ENCODE measurements at regions of chr9 and their contacts with region 1.

Region 1: DNA sequence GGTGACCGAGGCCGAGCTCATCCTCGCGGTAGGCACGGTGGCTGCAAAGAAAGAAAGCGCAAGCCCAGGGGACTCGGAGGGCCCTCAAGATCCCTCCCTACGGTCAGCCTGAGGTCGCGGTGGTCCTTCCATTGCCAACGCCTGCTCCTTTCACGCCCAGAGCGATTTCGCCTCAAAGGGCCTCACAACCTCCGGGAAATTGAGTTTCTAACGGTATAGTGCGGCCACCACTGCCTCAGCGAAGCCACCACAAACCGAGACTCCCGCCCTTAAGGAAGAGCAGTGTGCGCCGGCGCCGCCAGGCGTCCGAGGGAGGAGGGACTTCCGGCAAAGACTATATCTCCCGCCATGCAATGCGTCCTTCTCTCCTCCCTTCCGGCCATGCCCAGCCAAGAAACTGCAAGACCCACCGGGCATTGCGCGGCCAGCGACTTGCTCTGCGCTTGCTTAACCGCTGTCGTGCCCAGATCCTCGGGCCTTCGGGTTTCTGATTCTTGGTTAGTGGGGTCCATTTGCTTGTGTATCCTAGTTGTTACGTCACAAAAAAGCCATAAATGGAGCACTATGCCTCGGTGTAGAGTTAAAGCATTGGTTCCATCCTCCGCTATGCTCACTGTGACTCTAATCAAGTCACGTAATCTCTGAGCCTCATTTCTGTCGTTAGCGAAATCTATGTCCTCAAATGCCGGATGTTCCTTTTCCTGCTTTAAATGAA is at the start of gene HAUS6:
- DNase-seq: peak; percentile 96
- ATAC-seq: peak; percentile 95
- H3K4me3 ChIP-seq: peak within 1 kb of the TSS; percentile 63 to 92 (median 82)
- H3K4me3 Mint-ChIP-seq: peak within 1 kb of the TSS; percentile 98
- H3K27ac ChIP-seq: peak within 1 kb of the TSS; percentile 53 to 88
- H3K27ac Mint-ChIP-seq: peak within 1 kb of the TSS; percentile 94
- H3K4me1 ChIP-seq: peaks cover 3 to 16% of the 10 kb centered on the region in 2 donors
- H3K4me1 Mint-ChIP-seq: peaks cover 22% of the 10 kb centered on the region
- H3K27me3 ChIP-seq: no peaks in the 10 kb centered on the region
- H3K27me3 Mint-ChIP-seq: no peaks in the 10 kb centered on the region
- CTCF ChIP-seq: peak; percentile 38
- total RNA-seq, gene HAUS6: 13.5 and 14.6 TPM in 2 replicates

Region 2: DNA sequence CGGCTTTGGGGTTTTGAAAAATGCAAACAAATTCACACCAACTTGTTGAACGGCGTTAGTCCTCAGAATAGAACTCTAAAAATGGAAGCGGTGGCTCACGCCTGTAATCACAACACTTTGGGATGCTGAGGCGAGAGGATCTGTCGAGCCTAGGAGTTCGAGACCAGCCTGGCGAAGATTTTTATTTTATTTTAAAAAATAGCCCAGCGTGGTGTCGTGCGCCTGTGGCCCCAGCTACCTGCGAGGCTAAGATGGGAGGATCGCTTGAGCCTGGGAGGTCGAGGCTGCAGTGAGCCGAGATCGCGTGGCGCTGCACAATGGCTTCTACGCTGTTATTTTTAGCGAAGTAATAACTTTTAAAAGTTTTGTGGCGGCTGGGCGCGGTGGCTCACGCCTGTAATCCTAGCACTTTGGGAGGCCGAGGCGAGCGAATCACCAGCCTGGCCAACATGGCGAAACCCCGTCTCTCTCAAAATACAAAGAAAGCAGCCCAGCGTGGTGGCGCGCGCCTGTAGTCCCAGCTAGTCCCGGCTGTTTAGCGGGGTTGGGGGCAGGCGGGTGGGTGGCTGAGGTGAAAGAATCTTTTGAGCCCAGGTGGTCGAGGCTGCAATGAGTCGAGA is 25.2 kb after region 1 on chr9:
- CTCF ChIA-PET with region 1: no interaction called
- POLR2A ChIA-PET with region 1: no interaction called
- intact Hi-C with region 1: loop called (anchors 1 kb)
- DNase-seq: no peak
- ATAC-seq: peak; percentile 10
- H3K4me3 ChIP-seq: peak overlapping the region; percentile 72 to 82 (median 77)
- H3K4me3 Mint-ChIP-seq: peak overlapping the region; percentile 96
- H3K27ac ChIP-seq: peak overlapping the region; percentile 66 to 67
- H3K27ac Mint-ChIP-seq: peak overlapping the region; percentile 88
- H3K4me1 ChIP-seq: peaks cover 5 to 26% of the 10 kb centered on the region in 2 donors
- H3K4me1 Mint-ChIP-seq: peaks cover 28% of the 10 kb centered on the region
- H3K27me3 ChIP-seq: no peaks in the 10 kb centered on the region
- H3K27me3 Mint-ChIP-seq: no peaks in the 10 kb centered on the region
- CTCF ChIP-seq: no peak

Region 3: GRCh38 chr9:19901586-19901985 is 798.8 kb after region 1 on chr9:
- CTCF ChIA-PET with region 1: no interaction called
- POLR2A ChIA-PET with region 1: no interaction called
- intact Hi-C with region 1: no loop called
- DNase-seq: no peak
- ATAC-seq: no peak
- H3K4me3 ChIP-seq: no peak overlapping the region
- H3K4me3 Mint-ChIP-seq: no peak overlapping the region
- H3K27ac ChIP-seq: no peak overlapping the region
- H3K27ac Mint-ChIP-seq: no peak overlapping the region
- H3K4me1 ChIP-seq: no peaks in the 10 kb centered on the region
- H3K4me1 Mint-ChIP-seq: no peaks in the 10 kb centered on the region
- H3K27me3 ChIP-seq: no peaks in the 10 kb centered on the region
- H3K27me3 Mint-ChIP-seq: peaks cover 3% of the 10 kb centered on the region
- CTCF ChIP-seq: no peak

Measured in B cell (primary cell).